Mammary epithelial cell (primary cell): ENCODE measurements at regions of chr17 and their contacts with region 1.

Region 1: GRCh38 chr17:71338396-71338795 is 782.4 kb upstream of the SOX9 start:
- DNase-seq: peak; percentile 70
- H3K4me3 ChIP-seq: peak overlapping the region; percentile 17 to 31 (median 29)
- H3K27ac ChIP-seq: peak overlapping the region; percentile 60
- H3K4me1 ChIP-seq: peaks cover 20% of the 10 kb centered on the region
- H3K27me3 ChIP-seq: no peaks in the 10 kb centered on the region
- CTCF ChIP-seq: no peak

Region 2: DNA sequence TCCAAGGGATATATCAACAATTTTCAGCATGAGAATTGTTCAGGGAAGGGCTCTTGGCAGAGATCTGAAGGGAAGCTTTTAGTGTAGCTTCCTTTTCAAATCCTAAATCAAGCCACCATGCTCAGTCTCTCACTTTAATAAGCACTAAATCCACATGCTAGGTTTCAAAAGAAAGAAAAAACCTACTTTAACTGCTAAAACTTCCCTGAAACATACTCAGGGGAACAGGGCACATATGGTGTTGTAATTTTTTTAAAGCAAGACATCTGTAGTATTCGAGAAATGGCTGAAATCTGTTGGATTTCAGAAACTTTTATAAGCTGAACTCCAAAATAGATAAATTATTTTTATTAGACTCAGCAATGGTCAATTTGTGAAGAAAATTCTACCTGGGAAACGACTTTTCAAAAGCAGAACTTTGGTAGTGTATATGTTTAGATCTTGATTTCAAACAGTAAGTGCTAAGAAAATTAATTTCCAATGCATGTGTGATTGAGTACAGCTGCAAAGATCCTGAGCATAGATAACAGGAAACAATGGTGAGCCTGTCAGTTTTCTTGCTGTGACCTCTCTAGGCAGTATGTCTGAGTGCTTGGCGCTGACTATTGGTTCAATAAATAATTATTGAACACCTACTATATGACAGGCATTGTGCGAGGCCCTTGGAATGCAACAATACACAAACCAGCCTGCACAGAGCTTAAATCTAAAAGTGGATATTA is 22.1 kb before region 1 on chr17:
- CTCF ChIA-PET with region 1: no interaction called
- dilution Hi-C with region 1: no loop called
- in situ Hi-C with region 1: no loop called
- intact Hi-C with region 1: no loop called
- DNase-seq: no peak
- H3K4me3 ChIP-seq: no peak overlapping the region
- H3K27ac ChIP-seq: no peak overlapping the region
- H3K4me1 ChIP-seq: no peaks in the 10 kb centered on the region
- H3K27me3 ChIP-seq: no peaks in the 10 kb centered on the region
- CTCF ChIP-seq: no peak

Region 3: GRCh38 chr17:71460943-71461342 is 122.5 kb after region 1 on chr17:
- CTCF ChIA-PET with region 1: no interaction called
- dilution Hi-C with region 1: no loop called
- in situ Hi-C with region 1: no loop called
- intact Hi-C with region 1: loop called (anchors 5 kb)
- DNase-seq: no peak
- H3K4me3 ChIP-seq: no peak overlapping the region
- H3K27ac ChIP-seq: no peak overlapping the region
- H3K4me1 ChIP-seq: peaks cover 41% of the 10 kb centered on the region
- H3K27me3 ChIP-seq: no peaks in the 10 kb centered on the region
- CTCF ChIP-seq: peak; percentile 20 to 36